Dendritic cell treated with granulocyte-macrophage colony-stimulating factor and Interleukin-4, amounts not matched to agents 40 ng/mL and 50 ng/mL, for 4 days (primary cell): ENCODE measurements at regions of chr20 and their contacts with region 1.

Region 1: GRCh38 chr20:23668477-23668951 is 20.3 kb downstream of the CST4 start:
- H3K4me3 Mint-ChIP-seq: no peak overlapping the region
- H3K27ac Mint-ChIP-seq: no peak overlapping the region
- H3K4me1 Mint-ChIP-seq: no peaks in the 10 kb centered on the region
- H3K27me3 Mint-ChIP-seq: no peaks in the 10 kb centered on the region

Region 2: GRCh38 chr20:23441850-23442313 is 226.6 kb before region 1 on chr20:
- intact Hi-C with region 1: loop called (anchors 5 kb)
- H3K4me3 Mint-ChIP-seq: no peak overlapping the region
- H3K27ac Mint-ChIP-seq: no peak overlapping the region
- H3K4me1 Mint-ChIP-seq: no peaks in the 10 kb centered on the region
- H3K27me3 Mint-ChIP-seq: peaks cover 3% of the 10 kb centered on the region

Region 3: DNA sequence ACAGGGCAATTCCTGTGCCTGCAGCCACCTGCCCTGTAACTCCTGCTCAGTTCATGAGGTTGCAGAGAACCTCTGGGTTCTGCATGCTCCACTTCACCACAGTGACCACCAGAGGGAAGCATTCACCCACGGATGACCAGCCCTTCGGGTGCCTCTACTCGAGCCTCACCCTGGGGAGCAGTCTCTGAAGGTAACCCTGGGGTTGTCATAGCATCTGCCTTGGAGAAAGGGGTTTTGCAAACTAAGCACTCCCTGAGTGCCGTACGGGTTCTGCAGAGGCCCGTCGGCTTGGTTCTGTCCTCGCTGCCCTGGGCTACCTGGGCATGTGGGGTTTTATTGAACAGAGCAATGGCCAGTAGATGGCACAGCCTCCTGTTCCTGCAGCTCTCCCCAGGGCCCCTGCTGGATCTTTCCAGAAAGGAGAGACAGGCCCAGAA is 221.3 kb after region 1 on chr20:
- intact Hi-C with region 1: loop called (anchors 5 kb)
- H3K4me3 Mint-ChIP-seq: no peak overlapping the region
- H3K27ac Mint-ChIP-seq: no peak overlapping the region
- H3K4me1 Mint-ChIP-seq: no peaks in the 10 kb centered on the region
- H3K27me3 Mint-ChIP-seq: no peaks in the 10 kb centered on the region

Region 4: DNA sequence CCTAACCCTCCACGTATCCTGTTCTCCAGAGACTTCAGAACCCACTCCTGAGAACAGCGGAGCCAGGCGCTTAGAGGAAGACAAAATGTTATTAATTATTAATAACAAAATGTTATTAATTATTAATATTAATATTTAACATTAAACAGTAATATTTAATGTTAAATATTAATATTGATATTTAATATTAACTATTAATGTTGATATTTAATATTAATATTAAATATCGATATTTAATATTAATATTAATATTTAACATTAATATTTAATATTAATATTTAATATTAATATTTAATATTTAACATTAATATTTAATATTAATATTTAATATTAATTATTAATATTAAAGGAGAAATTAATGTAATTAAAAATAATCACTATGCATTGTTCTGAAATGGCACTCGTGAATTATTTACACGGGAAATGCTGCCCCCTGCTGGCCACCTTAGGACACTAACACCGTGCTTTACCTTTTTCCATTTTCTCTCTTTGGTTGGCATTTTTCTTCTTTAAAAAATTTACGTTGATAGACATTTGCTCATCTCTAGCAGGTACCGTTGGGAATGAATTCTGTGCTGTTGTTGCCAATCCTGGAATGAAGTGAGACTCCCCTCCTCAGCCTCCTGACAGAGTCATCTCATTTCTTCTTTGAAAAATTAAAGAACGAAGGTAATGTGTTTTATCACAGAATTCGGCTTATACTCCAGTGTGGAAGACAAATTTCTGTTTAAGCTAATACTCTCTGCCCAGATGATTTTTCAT is 327.6 kb after region 1 on chr20:
- intact Hi-C with region 1: loop called (anchors 2 kb)
- H3K4me3 Mint-ChIP-seq: no peak overlapping the region
- H3K27ac Mint-ChIP-seq: no peak overlapping the region
- H3K4me1 Mint-ChIP-seq: no peaks in the 10 kb centered on the region
- H3K27me3 Mint-ChIP-seq: peaks cover 2% of the 10 kb centered on the region